ENCODE measurements at regions of chr3 and their contacts with region 1.

Region 1: GRCh38 chr3:50503504-50504342 is at the start of gene CACNA2D2:
- DNase-seq: peak; percentile 70 to 76 (median 71)
- H3K4me3 ChIP-seq: peak within 1 kb of the TSS in 1 of 2 donors; percentile 32
- H3K4me3 Mint-ChIP-seq: peak within 1 kb of the TSS; percentile 69 to 85 (median 74)
- H3K27ac ChIP-seq: no peak within 1 kb of the TSS
- H3K27ac Mint-ChIP-seq: peak within 1 kb of the TSS in 1 of 7 donors; percentile 54
- H3K4me1 ChIP-seq: peaks cover 9% of the 10 kb centered on the region
- H3K4me1 Mint-ChIP-seq: peaks cover 2 to 18% (median 9%) of the 10 kb centered on the region in 4 donors
- H3K27me3 ChIP-seq: no peaks in the 10 kb centered on the region
- H3K27me3 Mint-ChIP-seq: peaks cover 6 to 13% of the 10 kb centered on the region in 2 donors
- total RNA-seq, gene CACNA2D2: 1.7 to 1.9 TPM

Region 2: DNA sequence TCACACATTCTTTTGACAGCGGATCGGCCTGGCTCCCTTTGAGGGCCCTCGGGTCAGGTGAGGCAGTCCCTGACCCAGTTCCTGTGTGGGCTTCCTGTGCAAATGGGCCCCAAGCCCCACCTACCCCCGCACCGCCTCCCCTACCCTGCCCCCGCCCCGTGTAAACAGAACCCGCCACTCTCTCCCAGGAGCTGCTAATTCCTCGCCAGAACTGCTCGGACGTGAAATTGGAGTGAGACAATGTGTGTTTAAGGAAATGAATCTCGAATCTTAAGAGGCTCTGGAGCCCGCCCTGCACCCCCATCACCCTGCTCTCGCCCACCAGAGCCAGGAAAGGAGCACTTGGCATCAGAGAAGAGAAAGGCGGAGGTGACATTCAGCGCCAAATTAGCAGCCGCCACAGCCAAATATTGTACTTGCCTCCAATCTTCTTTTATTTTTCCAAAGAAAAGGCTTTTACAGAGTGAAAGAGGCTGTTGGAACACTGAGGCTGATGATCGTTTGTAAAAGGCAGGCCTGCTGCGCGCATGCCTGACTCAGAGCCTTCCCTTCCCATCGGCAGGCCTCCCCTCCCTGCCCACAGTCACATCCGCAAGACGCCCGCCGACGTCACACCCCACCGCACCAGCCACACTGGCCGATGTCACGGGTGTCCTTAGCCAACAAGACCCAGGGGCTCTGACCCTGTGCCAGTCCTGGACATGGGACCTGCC is 53.4 kb before region 1 on chr3:
- CTCF ChIA-PET with region 1: no interaction called
- POLR2A ChIA-PET with region 1: no interaction called
- intact Hi-C with region 1: loop called (anchors 10 kb)
- DNase-seq: peak; percentile 60 to 75 (median 65)
- H3K4me3 ChIP-seq: peak overlapping the region in 1 of 2 donors; percentile 41
- H3K4me3 Mint-ChIP-seq: peak overlapping the region; percentile 61 to 85 (median 82)
- H3K27ac ChIP-seq: peak overlapping the region; percentile 58
- H3K27ac Mint-ChIP-seq: peak overlapping the region; percentile 82 to 97 (median 94)
- H3K4me1 ChIP-seq: peaks cover 12% of the 10 kb centered on the region
- H3K4me1 Mint-ChIP-seq: peaks cover 2 to 41% (median 14%) of the 10 kb centered on the region in 4 donors
- H3K27me3 ChIP-seq: no peaks in the 10 kb centered on the region
- H3K27me3 Mint-ChIP-seq: no peaks in the 10 kb centered on the region

Measured in CD4-positive, alpha-beta memory T cell (primary cell).